Activated CD4-positive, alpha-beta T cell treated with anti-CD3 and anti-CD28 coated beads for 36 hours (primary cell): ENCODE measurements at regions of chr3 and their contacts with region 1.

Region 1: GRCh38 chr3:141738022-141738890 is at the start of gene RNF7:
- DNase-seq: peak; percentile 98
- ATAC-seq: peak; percentile 92
- H3K4me3 Mint-ChIP-seq: peak within 1 kb of the TSS; percentile 91
- H3K27ac Mint-ChIP-seq: peak within 1 kb of the TSS; percentile 99
- H3K4me1 Mint-ChIP-seq: peaks cover 39% of the 10 kb centered on the region
- H3K27me3 Mint-ChIP-seq: no peaks in the 10 kb centered on the region
- total RNA-seq, gene RNF7: 38.0 to 67.2 TPM

Region 2: DNA sequence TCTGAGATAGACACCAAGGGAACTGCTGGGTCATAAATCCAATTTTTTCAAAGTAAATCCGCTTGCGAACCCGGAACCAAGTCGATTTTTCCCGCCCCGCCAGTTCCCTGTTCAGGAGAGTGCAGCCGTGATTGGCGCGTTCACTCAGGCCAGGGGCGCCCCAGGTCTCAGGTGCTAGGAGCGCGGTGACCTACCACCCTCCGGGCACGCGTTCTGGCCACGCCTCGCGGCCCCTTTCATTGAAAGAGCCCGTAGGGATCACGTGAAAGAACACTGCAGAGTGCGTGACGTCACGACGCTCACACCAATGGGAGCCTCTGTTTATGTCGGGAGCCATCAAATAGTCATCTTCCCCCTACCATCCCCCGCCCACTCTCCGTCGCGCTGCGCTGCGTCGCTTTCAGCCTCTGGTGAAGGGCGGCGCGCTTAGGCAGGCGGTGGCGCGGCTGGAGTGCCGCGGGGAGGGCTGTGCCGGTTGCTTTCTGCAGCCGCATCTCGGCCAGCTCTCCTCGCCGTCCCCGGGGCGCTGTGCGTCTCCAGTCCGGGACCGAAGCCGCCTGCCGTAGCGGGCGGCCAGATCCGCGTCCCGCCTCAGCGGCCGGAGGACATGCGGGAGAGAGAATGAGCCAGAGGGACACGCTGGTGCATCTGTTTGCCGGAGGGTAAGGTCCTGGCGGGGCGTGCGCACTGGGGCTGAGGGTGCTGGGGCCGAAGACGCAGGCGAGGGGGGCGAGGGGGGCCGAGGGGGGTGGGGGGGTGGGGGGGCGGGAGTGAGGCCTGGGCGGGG is 796.6 kb before region 1 on chr3 and contains the start of gene SLC25A36:
- CTCF ChIA-PET with region 1: no interaction called
- POLR2A ChIA-PET with region 1: no interaction called
- intact Hi-C with region 1: loop called in 1 of 2 experiments (anchors 5 kb)
- DNase-seq: peak; percentile 99
- ATAC-seq: peak; percentile 98
- H3K4me3 Mint-ChIP-seq: peak within 1 kb of the TSS; percentile 93
- H3K27ac Mint-ChIP-seq: peak within 1 kb of the TSS; percentile 95
- H3K4me1 Mint-ChIP-seq: peaks cover 37% of the 10 kb centered on the region
- H3K27me3 Mint-ChIP-seq: no peaks in the 10 kb centered on the region
- total RNA-seq, gene SLC25A36: 42.3 to 62.3 TPM

Region 3: DNA sequence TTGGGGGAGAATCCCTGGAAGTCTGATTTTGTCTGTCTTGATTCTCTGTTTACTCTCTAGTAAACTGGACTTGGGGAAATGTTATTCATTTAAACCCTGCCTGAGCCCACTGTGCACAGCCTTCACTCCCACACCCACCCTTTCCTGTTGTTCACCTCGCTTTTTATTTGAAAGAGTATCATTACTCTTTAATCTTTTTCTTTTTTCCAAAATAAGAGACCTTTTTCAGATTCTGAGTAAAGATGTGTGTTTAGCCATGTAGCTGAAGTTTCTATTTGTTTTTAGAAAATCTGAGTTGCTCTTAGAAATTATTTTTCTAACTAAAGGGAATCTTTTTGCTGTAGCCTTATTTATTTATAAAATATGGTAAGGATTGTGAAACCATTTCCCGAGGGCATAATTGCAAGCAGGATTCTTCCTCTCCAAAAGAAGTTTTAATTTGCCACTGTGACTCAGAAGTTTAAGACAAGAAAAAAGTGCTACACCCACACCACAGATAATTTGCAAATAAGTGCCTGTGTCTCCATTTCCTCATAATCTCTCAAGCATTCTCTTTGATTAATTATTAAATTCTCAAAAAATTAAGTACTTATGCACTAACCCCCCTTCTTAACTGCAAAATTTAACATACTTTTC is 208.0 kb before region 1 on chr3:
- CTCF ChIA-PET with region 1: no interaction called
- POLR2A ChIA-PET with region 1: no interaction called
- intact Hi-C with region 1: no loop called
- DNase-seq: peak; percentile 37
- ATAC-seq: peak; percentile 63
- H3K4me3 Mint-ChIP-seq: peak overlapping the region; percentile 1
- H3K27ac Mint-ChIP-seq: peak overlapping the region; percentile 37
- H3K4me1 Mint-ChIP-seq: peaks cover 72% of the 10 kb centered on the region
- H3K27me3 Mint-ChIP-seq: no peaks in the 10 kb centered on the region

Region 4: DNA sequence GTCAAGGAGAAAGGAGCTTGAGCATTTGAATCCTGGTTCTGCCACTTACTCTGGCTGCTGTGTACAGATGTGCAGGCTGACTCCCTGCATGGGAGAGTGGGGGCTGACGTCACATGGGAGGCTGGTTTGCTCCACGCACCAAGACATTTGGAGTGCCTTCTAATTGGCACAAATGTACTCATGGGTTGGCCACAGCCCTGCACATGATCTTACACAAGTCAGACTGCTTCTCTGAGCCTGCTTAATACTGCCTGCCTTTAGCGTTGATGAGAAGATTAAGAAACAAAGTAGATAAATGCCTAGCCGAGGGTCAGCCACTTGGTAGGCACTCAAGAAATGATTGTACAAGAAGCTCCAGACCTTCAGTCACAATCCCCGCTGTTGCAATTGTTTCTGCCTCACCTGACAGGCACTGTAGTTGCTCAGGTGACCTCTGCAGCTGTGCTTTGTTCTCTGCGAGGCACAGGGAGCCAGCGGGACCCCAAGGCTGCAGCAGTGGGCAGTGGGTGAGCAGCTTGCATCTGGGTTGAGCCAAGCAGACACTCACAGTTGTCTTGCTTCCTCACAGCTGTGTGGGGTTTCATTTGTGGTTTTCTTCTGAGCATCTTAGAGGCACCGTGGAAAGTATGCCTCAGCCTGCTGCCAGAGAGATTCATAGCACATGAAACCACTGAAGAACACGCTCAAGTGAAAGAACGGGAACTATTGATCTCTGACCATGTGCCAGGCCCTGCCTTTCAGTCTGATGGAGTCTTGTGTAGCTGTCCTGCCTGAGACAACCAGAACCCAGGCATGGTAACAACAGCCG is 58.0 kb after region 1 on chr3:
- CTCF ChIA-PET with region 1: interaction called, 16 read pairs
- POLR2A ChIA-PET with region 1: interaction called, 7 read pairs
- intact Hi-C with region 1: loop called (anchors 1 kb)
- DNase-seq: peak; percentile 90
- ATAC-seq: peak; percentile 84
- H3K4me3 Mint-ChIP-seq: peak overlapping the region; percentile 77
- H3K27ac Mint-ChIP-seq: peak overlapping the region; percentile 97
- H3K4me1 Mint-ChIP-seq: peaks cover 52% of the 10 kb centered on the region
- H3K27me3 Mint-ChIP-seq: no peaks in the 10 kb centered on the region

Region 5: GRCh38 chr3:141913150-141913811 is 175.0 kb after region 1 on chr3:
- CTCF ChIA-PET with region 1: interaction called, 19 read pairs
- POLR2A ChIA-PET with region 1: interaction called, 5 read pairs
- intact Hi-C with region 1: loop called (anchors 1 kb)
- DNase-seq: peak; percentile 70
- ATAC-seq: peak; percentile 93
- H3K4me3 Mint-ChIP-seq: no peak overlapping the region
- H3K27ac Mint-ChIP-seq: no peak overlapping the region
- H3K4me1 Mint-ChIP-seq: no peaks in the 10 kb centered on the region
- H3K27me3 Mint-ChIP-seq: no peaks in the 10 kb centered on the region

Region 6: DNA sequence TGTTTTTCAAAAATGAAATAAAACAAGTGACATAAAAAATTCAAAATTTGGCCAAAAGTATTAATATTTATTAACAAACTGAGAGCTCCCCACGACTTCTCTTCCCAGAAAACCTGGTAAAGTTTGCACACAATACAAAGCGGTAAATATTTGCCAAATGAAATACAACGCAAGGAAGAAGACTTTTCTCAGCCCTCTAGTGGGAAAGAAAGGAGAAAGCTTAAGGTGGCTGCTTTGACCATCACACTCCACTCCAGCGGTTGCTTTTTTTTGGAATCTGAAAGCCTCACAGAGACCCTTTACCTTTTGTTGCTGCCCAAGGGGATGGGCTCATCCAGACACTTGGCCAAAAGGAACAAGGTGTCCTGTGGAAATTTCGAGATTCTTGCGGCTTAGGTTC is 488.2 kb after region 1 on chr3:
- CTCF ChIA-PET with region 1: no interaction called
- POLR2A ChIA-PET with region 1: no interaction called
- intact Hi-C with region 1: loop called in 1 of 2 experiments (anchors 1 kb)
- DNase-seq: no peak
- ATAC-seq: no peak
- H3K4me3 Mint-ChIP-seq: peak overlapping the region; percentile 82
- H3K27ac Mint-ChIP-seq: no peak overlapping the region
- H3K4me1 Mint-ChIP-seq: peaks cover 13% of the 10 kb centered on the region
- H3K27me3 Mint-ChIP-seq: no peaks in the 10 kb centered on the region

Region 7: DNA sequence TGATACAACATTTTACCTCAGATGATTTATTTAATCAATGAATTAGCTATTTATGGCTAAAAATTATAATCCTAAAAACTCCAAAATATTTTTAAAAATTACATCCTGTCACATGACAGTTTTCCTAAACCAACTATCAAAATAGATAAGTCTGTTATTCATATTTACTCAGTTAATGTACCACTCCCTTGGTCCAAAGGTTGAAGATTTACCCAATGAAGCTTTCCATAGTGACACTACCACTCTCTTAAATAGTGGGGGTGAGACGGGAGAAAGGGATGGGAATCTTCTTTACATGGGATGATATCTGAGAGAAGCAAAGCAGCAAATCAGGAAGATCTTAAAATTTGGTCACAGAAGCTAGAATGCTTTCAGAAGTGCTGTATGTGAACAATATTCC is 679.0 kb after region 1 on chr3:
- CTCF ChIA-PET with region 1: no interaction called
- POLR2A ChIA-PET with region 1: no interaction called
- intact Hi-C with region 1: no loop called
- DNase-seq: no peak
- ATAC-seq: no peak
- H3K4me3 Mint-ChIP-seq: no peak overlapping the region
- H3K27ac Mint-ChIP-seq: no peak overlapping the region
- H3K4me1 Mint-ChIP-seq: no peaks in the 10 kb centered on the region
- H3K27me3 Mint-ChIP-seq: no peaks in the 10 kb centered on the region

Region 8: DNA sequence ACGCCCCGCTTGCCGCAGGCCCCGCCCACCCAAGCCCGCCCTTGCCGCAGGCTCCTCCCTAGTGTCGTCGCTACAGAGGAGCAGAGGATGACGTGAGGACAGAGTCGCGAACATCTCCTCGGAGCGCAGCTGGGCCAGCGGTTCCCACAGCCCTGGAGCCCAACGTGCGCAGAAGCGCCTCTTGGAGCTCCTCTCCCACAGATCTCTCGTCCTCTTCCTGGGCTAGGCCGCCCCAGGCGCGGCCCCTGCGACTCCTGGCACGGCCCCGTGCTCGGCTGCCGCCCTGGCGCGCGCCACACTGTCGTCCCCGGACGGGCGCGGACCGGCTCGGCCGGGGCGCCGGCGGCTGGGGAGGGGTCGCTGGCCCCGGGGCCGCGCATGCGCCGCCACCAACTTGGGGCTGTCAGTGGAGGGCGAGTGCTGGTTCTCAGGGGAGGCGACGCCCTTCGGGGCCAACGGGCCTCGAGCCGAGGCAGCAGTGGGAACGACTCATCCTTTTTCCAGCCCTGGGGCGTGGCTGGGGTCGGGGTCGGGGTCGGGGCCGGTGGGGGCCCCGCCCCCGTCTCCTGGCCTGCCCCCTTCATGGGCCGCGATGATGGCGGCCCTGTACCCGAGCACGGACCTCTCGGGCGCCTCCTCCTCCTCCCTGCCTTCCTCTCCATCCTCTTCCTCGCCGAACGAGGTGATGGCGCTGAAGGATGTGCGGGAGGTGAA is 985.9 kb after region 1 on chr3 and contains the start of gene TRPC1:
- CTCF ChIA-PET with region 1: no interaction called
- POLR2A ChIA-PET with region 1: no interaction called
- intact Hi-C with region 1: loop called in 1 of 2 experiments (anchors 1 kb)
- DNase-seq: peak; percentile 87
- ATAC-seq: peak; percentile 95
- H3K4me3 Mint-ChIP-seq: peak within 1 kb of the TSS; percentile 82
- H3K27ac Mint-ChIP-seq: peak within 1 kb of the TSS; percentile 87
- H3K4me1 Mint-ChIP-seq: peaks cover 11% of the 10 kb centered on the region
- H3K27me3 Mint-ChIP-seq: peaks cover 37% of the 10 kb centered on the region
- total RNA-seq, gene TRPC1: 4.7 to 6.2 TPM